HEK293 (cell line): ENCODE measurements at regions of chr7 and their contacts with region 1.

Region 1: DNA sequence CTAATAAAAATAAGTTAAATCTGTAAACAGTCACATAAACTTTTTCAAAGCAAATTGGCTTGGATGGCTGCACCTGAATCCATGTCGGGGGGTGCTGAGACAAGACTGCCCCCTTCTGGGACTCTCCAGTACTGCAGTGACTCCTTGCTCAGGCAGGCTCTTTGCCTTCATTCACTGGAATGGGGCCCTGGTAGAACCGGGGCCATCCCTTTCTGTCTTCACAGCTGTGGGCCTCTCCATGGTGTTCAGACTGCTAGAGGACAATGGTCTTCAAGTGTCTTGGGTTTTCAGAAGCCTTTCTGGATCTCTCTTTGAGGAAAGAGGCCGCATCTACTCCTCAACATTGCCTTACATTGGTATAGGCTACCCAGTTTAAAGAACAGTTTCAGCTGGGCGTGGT is 16.1 kb upstream of the IMPDH1 start:
- H3K4me3 ChIP-seq: no peak overlapping the region
- H3K27ac ChIP-seq: no peak overlapping the region
- H3K4me1 ChIP-seq: no peaks in the 10 kb centered on the region
- CTCF ChIP-seq: peak; percentile 33; the same call in 1 of the 2 replicates

Region 2: GRCh38 chr7:128373606-128374005 is 52.2 kb before region 1 on chr7:
- CTCF ChIA-PET with region 1: interaction called, 10 read pairs
- POLR2A ChIA-PET with region 1: no interaction called
- H3K4me3 ChIP-seq: no peak overlapping the region
- H3K27ac ChIP-seq: no peak overlapping the region
- H3K4me1 ChIP-seq: no peaks in the 10 kb centered on the region
- CTCF ChIP-seq: no peak

Region 3: GRCh38 chr7:128387216-128388144 is 38.4 kb before region 1 on chr7:
- CTCF ChIA-PET with region 1: interaction called, 66 read pairs
- POLR2A ChIA-PET with region 1: no interaction called
- H3K4me3 ChIP-seq: no peak overlapping the region
- H3K27ac ChIP-seq: no peak overlapping the region
- H3K4me1 ChIP-seq: no peaks in the 10 kb centered on the region
- CTCF ChIP-seq: peak; percentile 88

Region 4: GRCh38 chr7:128409596-128410160 is 16.2 kb before region 1 on chr7 and contains the start of gene IMPDH1:
- CTCF ChIA-PET with region 1: interaction called, 131 read pairs
- POLR2A ChIA-PET with region 1: no interaction called
- H3K4me3 ChIP-seq: peak within 1 kb of the TSS; percentile 70
- H3K27ac ChIP-seq: peak within 1 kb of the TSS; percentile 45
- H3K4me1 ChIP-seq: no peaks in the 10 kb centered on the region; the same call in 1 of the 2 replicates
- CTCF ChIP-seq: no peak

Region 5: DNA sequence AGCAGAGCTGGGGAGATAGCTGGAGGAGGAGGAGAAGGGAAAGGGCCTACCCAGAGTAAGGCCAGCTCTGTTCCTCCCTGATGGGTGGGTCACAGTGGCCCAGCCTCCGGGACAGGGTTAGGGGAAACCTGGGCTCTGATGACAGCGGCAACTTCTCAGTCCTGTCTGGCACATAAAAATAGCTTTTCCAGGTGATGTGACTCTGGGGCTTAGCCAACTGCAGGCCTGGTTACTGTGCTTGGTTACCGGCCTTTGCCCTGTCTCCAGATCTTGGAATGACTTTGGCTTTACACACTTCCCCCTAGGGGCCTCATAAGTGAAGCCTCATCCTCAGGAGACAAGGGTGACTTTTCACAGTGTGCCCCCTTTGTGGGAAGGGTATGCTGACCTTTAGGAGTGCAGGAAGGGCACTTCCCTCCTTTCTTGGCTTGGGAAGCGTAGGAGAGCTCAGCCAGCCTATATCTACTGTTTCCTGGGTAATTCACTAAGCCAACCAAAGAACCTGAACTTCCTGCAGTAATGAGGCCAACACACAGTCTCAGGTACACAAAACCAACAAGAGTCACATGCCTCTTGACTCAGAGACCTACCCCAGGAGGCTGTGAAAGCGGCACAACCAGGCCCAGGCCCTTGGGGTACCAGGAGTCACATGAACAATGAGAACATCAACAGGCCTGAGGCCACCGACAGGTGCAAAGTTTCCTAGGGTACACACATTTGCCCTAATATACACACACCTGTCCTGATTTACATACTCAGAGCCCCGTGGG is 18.2 kb after region 1 on chr7:
- CTCF ChIA-PET with region 1: interaction called, 27 read pairs
- POLR2A ChIA-PET with region 1: no interaction called
- H3K4me3 ChIP-seq: no peak overlapping the region
- H3K27ac ChIP-seq: no peak overlapping the region
- H3K4me1 ChIP-seq: no peaks in the 10 kb centered on the region
- CTCF ChIP-seq: no peak

Region 6: DNA sequence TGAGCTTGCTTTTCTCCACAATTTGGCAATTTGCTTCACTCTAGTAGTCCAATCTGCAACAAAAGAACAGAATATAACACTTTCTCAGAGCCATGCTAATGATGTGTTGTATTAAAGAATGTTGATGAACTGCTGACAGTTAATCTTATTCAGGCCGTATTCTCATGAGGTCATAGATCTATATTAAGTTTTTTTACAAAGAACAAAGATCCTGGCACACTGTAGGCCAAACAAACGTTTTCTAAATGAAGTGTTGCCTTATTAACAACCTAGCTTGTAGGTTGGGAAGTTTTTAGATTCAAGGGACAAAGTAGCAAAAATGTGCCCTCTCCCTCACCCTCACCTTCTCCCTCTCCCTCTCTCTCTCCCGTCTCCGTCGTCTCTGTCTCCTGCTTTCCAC is 36.6 kb after region 1 on chr7:
- CTCF ChIA-PET with region 1: interaction called, 189 read pairs
- POLR2A ChIA-PET with region 1: no interaction called
- H3K4me3 ChIP-seq: no peak overlapping the region
- H3K27ac ChIP-seq: no peak overlapping the region
- H3K4me1 ChIP-seq: peaks cover 4% of the 10 kb centered on the region; the same call in 1 of the 2 replicates
- CTCF ChIP-seq: no peak